Pancreas (tissue), 10 donors: ENCODE measurements at regions of chr4 and their contacts with region 1.

Region 1: GRCh38 chr4:156475322-156475721 is 496.3 kb downstream of the PDGFC start:
- DNase-seq: no peak
- ATAC-seq: peak; percentile 61 to 92 (median 88)
- H3K4me3 ChIP-seq: no peak overlapping the region
- H3K27ac ChIP-seq: no peak overlapping the region
- H3K4me1 ChIP-seq: no peaks in the 10 kb centered on the region
- H3K27me3 ChIP-seq: peaks cover 0 to 5% (median 0%) of the 10 kb centered on the region in 4 donors
- CTCF ChIP-seq: peak in 3 of 4 donors; percentile 12 to 32 (median 31)

Region 2: DNA sequence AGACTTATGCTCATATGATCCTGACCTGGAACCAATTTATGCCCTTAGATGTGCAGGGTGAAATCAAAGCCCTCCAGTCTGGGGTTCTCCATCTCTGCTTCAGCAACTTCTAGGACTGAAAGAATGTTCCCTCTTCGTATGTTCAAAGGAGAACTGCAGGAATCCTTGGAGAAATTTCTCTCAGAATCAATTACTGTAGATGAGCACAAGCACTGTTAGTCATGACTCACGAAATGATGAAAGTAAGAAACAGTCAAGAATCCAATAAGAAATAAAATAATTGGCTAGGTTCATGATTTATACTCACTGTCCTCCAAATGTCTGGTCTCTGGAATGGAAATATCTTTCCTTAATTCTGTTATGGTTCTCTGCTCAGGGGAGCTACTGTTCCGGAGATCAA is 148.1 kb after region 1 on chr4:
- intact Hi-C with region 1: no loop called
- DNase-seq: no peak
- ATAC-seq: no peak
- H3K4me3 ChIP-seq: no peak overlapping the region
- H3K27ac ChIP-seq: no peak overlapping the region
- H3K4me1 ChIP-seq: no peaks in the 10 kb centered on the region
- H3K27me3 ChIP-seq: no peaks in the 10 kb centered on the region
- CTCF ChIP-seq: no peak

Region 3: GRCh38 chr4:157052429-157053040 is 577.2 kb after region 1 on chr4:
- intact Hi-C with region 1: loop called in 1 of 3 experiments (anchors 10 kb)
- DNase-seq: no peak
- ATAC-seq: no peak
- H3K4me3 ChIP-seq: no peak overlapping the region
- H3K27ac ChIP-seq: no peak overlapping the region
- H3K4me1 ChIP-seq: no peaks in the 10 kb centered on the region
- H3K27me3 ChIP-seq: no peaks in the 10 kb centered on the region
- CTCF ChIP-seq: no peak